ENCODE measurements at regions of chr13 and their contacts with region 1.

Region 1: GRCh38 chr13:113364311-113364889 is 470 bp upstream of the GRTP1 start:
- DNase-seq: peak in 2 of 10 donors; percentile 24 to 40
- H3K4me3 ChIP-seq: peak overlapping the region in 58 of 59 donors; percentile 8 to 68 (median 46)
- H3K27ac ChIP-seq: peak overlapping the region in 5 of 59 donors; percentile 46 to 71 (median 58)
- H3K27me3 ChIP-seq: peaks cover 0 to 30% (median 12%) of the 10 kb centered on the region in 45 donors
- CTCF ChIP-seq: no peak

Region 2: GRCh38 chr13:113267642-113268405 is 96.6 kb before region 1 on chr13:
- intact Hi-C with region 1: no loop called
- DNase-seq: no peak
- H3K4me3 ChIP-seq: no peak overlapping the region
- H3K27ac ChIP-seq: no peak overlapping the region
- H3K27me3 ChIP-seq: no peaks in the 10 kb centered on the region
- CTCF ChIP-seq: no peak

Region 3: DNA sequence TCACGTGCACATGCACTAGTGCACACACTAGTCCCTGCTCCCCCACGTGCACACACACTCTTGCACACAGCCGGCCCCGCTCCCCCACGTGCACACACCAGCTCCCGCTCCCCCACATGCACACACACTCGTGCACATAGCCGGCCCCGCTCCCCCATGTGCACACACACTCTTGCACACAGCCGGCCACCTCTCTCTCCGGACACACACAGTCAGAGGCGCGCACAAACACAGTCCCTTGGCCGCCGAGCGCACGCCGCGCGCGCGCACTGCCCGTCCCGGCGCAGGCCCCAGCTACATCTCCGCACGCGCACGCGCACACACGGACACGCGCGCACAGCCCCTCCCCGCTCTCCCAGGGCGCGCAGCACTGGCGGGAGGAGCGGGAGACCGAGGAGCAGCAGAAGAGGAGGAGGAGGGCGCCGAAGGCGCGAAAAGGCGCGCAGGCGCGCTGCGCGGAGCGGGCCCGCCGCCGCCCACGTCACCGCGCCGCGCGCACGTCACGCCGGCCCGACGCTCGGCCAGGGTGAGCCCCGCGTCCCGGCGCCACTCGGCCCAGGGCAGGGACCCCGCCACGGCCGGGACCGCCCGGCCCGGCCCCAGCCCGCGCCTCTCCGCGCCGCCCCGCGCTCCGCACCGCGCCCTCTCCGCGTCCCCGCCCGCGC is 219.9 kb after region 1 on chr13 and contains the start of gene TFDP1:
- intact Hi-C with region 1: loop called in 1 of 2 experiments (anchors 5 kb)
- DNase-seq: peak; percentile 51 to 89 (median 78)
- H3K4me3 ChIP-seq: peak within 1 kb of the TSS; percentile 41 to 76 (median 61)
- H3K27ac ChIP-seq: peak within 1 kb of the TSS in 2 of 59 donors; percentile 18 to 48
- H3K27me3 ChIP-seq: no peaks in the 10 kb centered on the region
- CTCF ChIP-seq: no peak
- total RNA-seq, gene TFDP1: 21.2 to 60.2 (median 33.4) TPM